Activated B cell treated with CpG ODN at 0.5 μM for 24 hours (primary cell): ENCODE measurements at regions of chrX and their contacts with region 1.

Region 1: GRCh38 chrX:1246816-1247215 is 21.8 kb upstream of the CSF2RA start:
- DNase-seq: peak; percentile 71
- ATAC-seq: peak; percentile 65
- H3K4me3 Mint-ChIP-seq: no peak overlapping the region
- H3K27ac Mint-ChIP-seq: no peak overlapping the region
- H3K4me1 Mint-ChIP-seq: peaks cover 22% of the 10 kb centered on the region
- H3K27me3 Mint-ChIP-seq: peaks cover 5% of the 10 kb centered on the region
- CTCF ChIP-seq: no peak

Region 2: GRCh38 chrX:769796-770195 is 477.0 kb before region 1 on chrX:
- CTCF ChIA-PET with region 1: no interaction called
- POLR2A ChIA-PET with region 1: no interaction called
- intact Hi-C with region 1: no loop called
- DNase-seq: no peak
- ATAC-seq: no peak
- H3K4me3 Mint-ChIP-seq: no peak overlapping the region
- H3K27ac Mint-ChIP-seq: no peak overlapping the region
- H3K4me1 Mint-ChIP-seq: no peaks in the 10 kb centered on the region
- H3K27me3 Mint-ChIP-seq: no peaks in the 10 kb centered on the region
- CTCF ChIP-seq: no peak

Region 3: GRCh38 chrX:1205680-1206611 is 40.9 kb before region 1 on chrX:
- CTCF ChIA-PET with region 1: no interaction called
- POLR2A ChIA-PET with region 1: no interaction called
- intact Hi-C with region 1: loop called (anchors 1 kb)
- DNase-seq: no peak
- ATAC-seq: peak; percentile 77
- H3K4me3 Mint-ChIP-seq: peak overlapping the region; percentile 76
- H3K27ac Mint-ChIP-seq: no peak overlapping the region
- H3K4me1 Mint-ChIP-seq: peaks cover 17% of the 10 kb centered on the region
- H3K27me3 Mint-ChIP-seq: peaks cover 5% of the 10 kb centered on the region
- CTCF ChIP-seq: no peak

Region 4: DNA sequence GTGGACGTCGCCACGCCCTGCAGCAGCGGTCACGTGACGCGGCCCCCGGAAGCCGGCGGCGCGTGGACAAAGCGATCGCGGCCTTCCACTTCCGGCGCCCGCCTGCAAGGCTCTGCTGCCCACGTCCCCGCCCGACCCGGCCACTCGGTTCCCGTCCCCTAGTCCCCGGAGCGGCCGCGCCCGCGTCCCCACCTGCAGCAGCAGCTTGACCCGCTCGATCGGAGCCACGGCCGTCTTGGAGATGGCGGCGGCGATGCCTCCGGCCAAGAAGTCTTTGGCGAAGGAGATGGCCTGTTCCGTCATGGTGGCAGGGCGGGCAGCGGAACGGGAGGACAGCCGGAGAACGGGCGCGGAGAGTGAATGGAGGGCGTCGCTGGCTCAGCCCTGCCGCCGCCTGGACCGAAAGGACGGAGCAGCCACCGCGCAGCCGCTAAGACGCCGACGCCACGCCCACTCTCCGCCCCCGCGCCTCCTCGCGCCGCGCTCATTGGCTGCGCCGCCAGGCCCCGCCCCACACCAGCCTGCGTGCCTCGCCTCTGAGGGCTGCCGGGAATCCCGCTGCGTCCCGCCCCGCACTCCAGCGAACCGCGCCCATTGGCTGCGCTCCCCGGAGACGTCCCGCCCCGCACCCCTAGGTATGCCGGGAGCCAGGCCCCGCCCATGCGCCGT is 145.0 kb after region 1 on chrX and contains the start of gene SLC25A6:
- CTCF ChIA-PET with region 1: no interaction called
- POLR2A ChIA-PET with region 1: no interaction called
- intact Hi-C with region 1: loop called (anchors 1 kb)
- DNase-seq: peak; percentile 100
- ATAC-seq: peak; percentile 96
- H3K4me3 Mint-ChIP-seq: peak within 1 kb of the TSS; percentile 93
- H3K27ac Mint-ChIP-seq: peak within 1 kb of the TSS; percentile 93
- H3K4me1 Mint-ChIP-seq: peaks cover 47% of the 10 kb centered on the region
- H3K27me3 Mint-ChIP-seq: no peaks in the 10 kb centered on the region
- CTCF ChIP-seq: no peak
- total RNA-seq, gene SLC25A6: 436 and 472 TPM in 2 replicates

Region 5: DNA sequence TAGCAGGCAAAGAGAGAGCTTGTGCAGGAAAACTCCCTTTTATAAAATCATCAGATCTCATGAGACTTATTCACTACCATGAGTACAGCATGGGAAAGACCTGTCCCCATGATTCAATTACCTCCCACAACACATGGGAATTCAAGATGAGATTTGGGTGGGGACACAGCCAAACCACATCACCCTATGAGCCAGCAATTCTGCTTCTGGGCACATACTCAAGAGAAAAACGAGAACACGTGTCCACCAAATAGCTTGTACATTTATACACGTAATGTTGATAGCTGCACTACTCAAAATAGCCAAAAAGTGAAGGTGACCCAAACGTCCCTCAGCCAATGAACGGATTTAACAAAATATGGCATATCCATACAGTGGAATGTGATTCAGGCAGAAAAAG is 1348.4 kb after region 1 on chrX:
- CTCF ChIA-PET with region 1: no interaction called
- POLR2A ChIA-PET with region 1: no interaction called
- intact Hi-C with region 1: loop called (anchors 1 kb)
- DNase-seq: no peak
- ATAC-seq: no peak
- H3K4me3 Mint-ChIP-seq: no peak overlapping the region
- H3K27ac Mint-ChIP-seq: no peak overlapping the region
- H3K4me1 Mint-ChIP-seq: peaks cover 6% of the 10 kb centered on the region
- H3K27me3 Mint-ChIP-seq: no peaks in the 10 kb centered on the region
- CTCF ChIP-seq: no peak

Region 6: GRCh38 chrX:2819345-2820135 is 1572.7 kb after region 1 on chrX:
- CTCF ChIA-PET with region 1: no interaction called
- POLR2A ChIA-PET with region 1: no interaction called
- intact Hi-C with region 1: loop called (anchors 10 kb)
- DNase-seq: no peak
- ATAC-seq: no peak
- H3K4me3 Mint-ChIP-seq: no peak overlapping the region
- H3K27ac Mint-ChIP-seq: no peak overlapping the region
- H3K4me1 Mint-ChIP-seq: no peaks in the 10 kb centered on the region
- H3K27me3 Mint-ChIP-seq: peaks cover 5% of the 10 kb centered on the region
- CTCF ChIP-seq: no peak